ENCODE measurements at regions of chr1 and their contacts with region 1.

Region 1: GRCh38 chr1:206663832-206664652 is 20.7 kb upstream of the MAPKAPK2 start:
- DNase-seq: peak; percentile 49
- ATAC-seq: peak; percentile 89
- H3K4me3 Mint-ChIP-seq: peak overlapping the region; percentile 47
- H3K27ac Mint-ChIP-seq: no peak overlapping the region
- H3K4me1 Mint-ChIP-seq: peaks cover 16% of the 10 kb centered on the region
- H3K27me3 Mint-ChIP-seq: peaks cover 17% of the 10 kb centered on the region
- CTCF ChIP-seq: peak; percentile 62

Region 2: GRCh38 chr1:206489980-206490770 is 173.9 kb before region 1 on chr1:
- CTCF ChIA-PET with region 1: interaction called, 34 read pairs
- POLR2A ChIA-PET with region 1: interaction called, 4 read pairs
- intact Hi-C with region 1: loop called (anchors 1 kb)
- DNase-seq: peak; percentile 66
- ATAC-seq: peak; percentile 95
- H3K4me3 Mint-ChIP-seq: no peak overlapping the region
- H3K27ac Mint-ChIP-seq: no peak overlapping the region
- H3K4me1 Mint-ChIP-seq: peaks cover 10% of the 10 kb centered on the region
- H3K27me3 Mint-ChIP-seq: no peaks in the 10 kb centered on the region
- CTCF ChIP-seq: no peak

Region 3: DNA sequence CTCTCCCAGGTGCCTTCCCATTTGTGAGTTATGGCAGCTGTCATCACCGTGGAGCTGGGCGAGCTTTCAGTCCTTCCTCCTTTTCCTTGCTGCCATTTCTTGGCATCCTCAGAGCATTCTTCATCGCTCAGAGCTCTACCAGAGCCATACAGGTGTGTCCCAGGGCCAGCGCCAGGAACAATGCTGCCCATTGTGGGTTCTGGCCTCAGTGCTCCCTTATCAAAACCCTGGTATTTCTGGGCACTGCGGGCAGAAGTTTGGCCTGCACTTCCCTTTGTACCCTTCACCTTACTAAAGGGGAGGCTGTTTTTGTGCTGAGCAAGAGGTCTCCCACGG is 128.2 kb before region 1 on chr1:
- CTCF ChIA-PET with region 1: no interaction called
- POLR2A ChIA-PET with region 1: no interaction called
- intact Hi-C with region 1: no loop called
- DNase-seq: no peak
- ATAC-seq: no peak
- H3K4me3 Mint-ChIP-seq: no peak overlapping the region
- H3K27ac Mint-ChIP-seq: no peak overlapping the region
- H3K4me1 Mint-ChIP-seq: no peaks in the 10 kb centered on the region
- H3K27me3 Mint-ChIP-seq: no peaks in the 10 kb centered on the region
- CTCF ChIP-seq: no peak

Region 4: GRCh38 chr1:206635080-206635977 is 28.7 kb before region 1 on chr1 and contains the start of gene DYRK3:
- CTCF ChIA-PET with region 1: interaction called, 75 read pairs
- POLR2A ChIA-PET with region 1: interaction called, 7 read pairs
- intact Hi-C with region 1: loop called (anchors 1 kb)
- DNase-seq: peak; percentile 86
- ATAC-seq: peak; percentile 91
- H3K4me3 Mint-ChIP-seq: peak within 1 kb of the TSS; percentile 89
- H3K27ac Mint-ChIP-seq: peak within 1 kb of the TSS; percentile 76
- H3K4me1 Mint-ChIP-seq: peaks cover 24% of the 10 kb centered on the region
- H3K27me3 Mint-ChIP-seq: peaks cover 2% of the 10 kb centered on the region
- CTCF ChIP-seq: no peak
- total RNA-seq, gene DYRK3: 0.33 and 0.37 TPM in 2 replicates

Region 5: DNA sequence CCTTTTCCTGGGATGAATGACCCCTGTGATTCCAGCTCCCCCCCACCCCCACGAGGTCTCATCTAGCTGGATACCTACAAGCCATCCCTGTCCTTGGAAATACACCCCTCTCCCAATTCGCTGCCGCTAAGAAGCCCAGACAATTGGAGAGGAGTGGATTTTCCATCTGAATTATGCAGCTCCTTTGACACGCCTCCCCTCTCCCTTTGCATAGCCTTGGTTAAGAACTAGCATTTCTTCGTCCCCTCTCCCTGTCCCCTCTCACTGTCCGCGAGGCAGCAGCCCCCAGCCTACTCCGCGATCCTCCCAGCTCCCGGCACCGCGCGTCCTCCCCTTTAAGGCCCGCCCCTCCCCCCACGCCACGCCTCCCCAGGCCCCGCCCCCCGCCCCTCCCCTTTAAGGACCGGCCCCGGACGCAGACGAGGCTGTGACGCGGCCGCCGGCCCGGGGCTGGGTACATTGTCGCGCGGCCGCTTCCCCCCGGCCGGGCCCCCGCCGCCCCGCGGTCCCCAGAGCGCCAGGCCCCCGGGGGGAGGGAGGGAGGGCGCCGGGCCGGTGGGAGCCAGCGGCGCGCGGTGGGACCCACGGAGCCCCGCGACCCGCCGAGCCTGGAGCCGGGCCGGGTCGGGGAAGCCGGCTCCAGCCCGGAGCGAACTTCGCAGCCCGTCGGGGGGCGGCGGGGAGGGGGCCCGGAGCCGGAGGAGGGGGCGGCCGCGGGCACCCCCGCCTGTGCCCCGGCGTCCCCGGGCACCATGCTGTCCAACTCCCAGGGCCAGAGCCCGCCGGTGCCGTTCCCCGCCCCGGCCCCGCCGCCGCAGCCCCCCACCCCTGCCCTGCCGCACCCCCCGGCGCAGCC is 20.7 kb after region 1 on chr1 and contains the start of gene MAPKAPK2:
- CTCF ChIA-PET with region 1: interaction called, 26 read pairs
- POLR2A ChIA-PET with region 1: interaction called, 9 read pairs
- intact Hi-C with region 1: loop called (anchors 1 kb)
- DNase-seq: peak; percentile 72
- ATAC-seq: peak; percentile 65
- H3K4me3 Mint-ChIP-seq: peak within 1 kb of the TSS; percentile 94
- H3K27ac Mint-ChIP-seq: peak within 1 kb of the TSS; percentile 90
- H3K4me1 Mint-ChIP-seq: peaks cover 80% of the 10 kb centered on the region
- H3K27me3 Mint-ChIP-seq: no peaks in the 10 kb centered on the region
- CTCF ChIP-seq: no peak
- total RNA-seq, gene MAPKAPK2: 71.2 and 72.1 TPM in 2 replicates

Region 6: DNA sequence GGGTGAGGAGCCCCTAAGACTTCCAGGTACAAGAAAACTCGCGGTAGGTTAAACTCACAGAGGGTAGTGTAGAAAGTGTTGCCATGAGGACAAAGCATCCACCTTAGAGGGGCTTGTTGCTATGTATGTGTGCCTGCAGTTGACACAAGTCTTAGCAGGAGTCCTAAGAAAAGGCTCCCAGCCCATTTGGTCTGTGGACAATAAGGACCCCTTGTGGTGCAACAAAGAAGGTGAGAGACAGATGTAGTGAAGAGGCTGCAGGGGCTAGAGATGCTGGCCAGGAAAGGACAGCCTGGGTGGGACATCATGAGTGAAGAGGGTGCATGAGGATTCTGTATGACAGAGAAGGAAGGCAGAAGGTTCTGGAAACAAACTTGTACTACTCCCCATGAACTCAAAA is 144.6 kb after region 1 on chr1:
- CTCF ChIA-PET with region 1: interaction called, 10 read pairs
- POLR2A ChIA-PET with region 1: no interaction called
- intact Hi-C with region 1: no loop called
- DNase-seq: no peak
- ATAC-seq: peak; percentile 94
- H3K4me3 Mint-ChIP-seq: no peak overlapping the region
- H3K27ac Mint-ChIP-seq: no peak overlapping the region
- H3K4me1 Mint-ChIP-seq: peaks cover 32% of the 10 kb centered on the region
- H3K27me3 Mint-ChIP-seq: no peaks in the 10 kb centered on the region
- CTCF ChIP-seq: no peak

Measured in activated B cell treated with CpG ODN at 0.5 μM for 24 hours (primary cell).